Right cardiac atrium (tissue), 5 donors: ENCODE measurements at regions of chr1 and their contacts with region 1.

Region 1: DNA sequence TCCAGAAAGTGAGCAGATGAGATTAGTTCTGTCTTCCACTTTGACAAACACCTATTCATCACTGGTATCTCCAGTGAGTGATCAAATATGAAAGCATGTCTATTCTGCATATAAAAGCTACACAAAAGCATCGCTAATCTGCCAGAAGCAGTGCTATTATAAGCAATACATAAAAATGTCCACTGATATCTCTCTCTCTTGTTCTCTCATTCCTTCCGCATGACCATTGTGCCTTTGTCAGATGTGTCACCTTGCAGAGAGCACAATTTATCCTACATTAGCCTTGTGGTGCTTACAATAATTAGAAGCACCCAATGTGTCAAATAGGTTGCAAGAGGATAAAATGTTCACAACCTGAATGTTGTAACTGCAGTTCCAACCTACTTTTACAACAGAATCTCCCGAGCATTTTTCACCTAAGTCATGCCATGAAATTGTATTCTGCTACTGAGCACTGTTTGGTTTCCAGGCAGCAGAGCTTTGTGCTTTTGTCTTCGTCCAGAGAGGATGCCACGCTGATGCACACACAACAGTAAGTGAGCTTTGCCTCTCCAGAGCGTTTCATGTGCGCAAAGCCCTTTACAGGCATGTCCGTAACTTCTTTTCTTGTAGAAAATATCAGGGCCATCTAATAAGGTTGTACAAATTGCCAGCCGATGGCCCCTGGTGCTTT is 198.7 kb upstream of the PLD5 start:
- DNase-seq: no peak
- ATAC-seq: no peak
- H3K4me3 ChIP-seq: no peak overlapping the region
- H3K27ac ChIP-seq: no peak overlapping the region
- H3K4me1 ChIP-seq: no peaks in the 10 kb centered on the region
- H3K27me3 ChIP-seq: no peaks in the 10 kb centered on the region

Region 2: GRCh38 chr1:243335292-243335691 is 612.1 kb after region 1 on chr1:
- intact Hi-C with region 1: loop called in 1 of 4 experiments (anchors 10 kb)
- DNase-seq: no peak
- ATAC-seq: no peak
- H3K4me3 ChIP-seq: no peak overlapping the region
- H3K27ac ChIP-seq: no peak overlapping the region
- H3K4me1 ChIP-seq: no peaks in the 10 kb centered on the region
- H3K27me3 ChIP-seq: no peaks in the 10 kb centered on the region